CD4-positive, alpha-beta T cell (primary cell): ENCODE measurements at regions of chr16 and their contacts with region 1.

Region 1: DNA sequence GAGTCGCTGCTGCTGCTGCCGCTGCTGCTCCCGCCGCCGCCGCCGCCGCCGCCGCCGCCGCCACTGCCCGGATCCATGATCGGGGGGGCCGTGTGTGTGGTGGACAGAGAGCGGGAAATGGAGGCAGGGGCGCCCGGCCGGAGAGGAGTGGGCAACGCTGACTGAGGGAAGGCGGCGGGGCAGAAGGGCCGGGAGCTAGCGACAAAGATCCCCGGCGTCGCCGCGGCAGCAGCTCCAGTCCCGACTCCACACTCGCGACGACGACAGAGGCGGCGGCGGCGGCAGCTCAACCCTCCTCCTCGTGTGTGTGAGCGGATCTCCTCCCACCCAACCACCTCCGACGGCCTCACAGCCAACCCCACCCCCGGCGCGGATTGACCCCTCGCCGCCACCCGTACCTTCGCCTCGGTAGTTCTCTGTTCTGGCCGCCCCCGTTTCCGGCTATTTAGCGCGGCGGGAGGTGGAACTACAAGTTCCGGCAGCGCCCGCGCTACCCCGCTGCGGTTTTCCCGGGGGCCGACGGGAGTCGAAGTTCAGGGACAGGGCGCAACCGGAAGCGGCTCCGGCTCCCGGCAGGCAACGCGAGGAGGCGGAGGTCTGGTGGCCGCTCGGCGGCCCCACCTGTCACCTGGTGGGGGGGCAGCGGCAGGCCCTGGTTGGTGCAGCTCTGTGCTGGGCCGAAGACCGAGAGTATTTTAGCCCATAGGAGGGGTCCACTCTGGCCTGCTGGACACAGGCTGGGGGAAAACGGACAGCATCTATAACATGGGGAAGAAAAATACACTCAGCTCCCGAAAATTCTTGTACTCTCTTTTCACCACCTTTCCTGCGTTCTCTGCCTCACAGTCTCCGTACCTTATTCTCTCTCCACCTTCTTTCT is at the start of gene GSPT1:
- DNase-seq: peak; percentile 98 to 99 (median 99)
- ATAC-seq: peak; percentile 84
- H3K4me3 ChIP-seq: peak within 1 kb of the TSS; percentile 82
- H3K4me3 Mint-ChIP-seq: peak within 1 kb of the TSS; percentile 98
- H3K27ac ChIP-seq: peak within 1 kb of the TSS; percentile 84 to 86
- H3K27ac Mint-ChIP-seq: peak within 1 kb of the TSS; percentile 98
- H3K4me1 ChIP-seq: peaks cover 32% of the 10 kb centered on the region
- H3K4me1 Mint-ChIP-seq: peaks cover 33% of the 10 kb centered on the region
- H3K27me3 ChIP-seq: peaks cover 0 to 2% of the 10 kb centered on the region in 2 experiments
- H3K27me3 Mint-ChIP-seq: no peaks in the 10 kb centered on the region
- CTCF ChIP-seq: no peak
- total RNA-seq, gene GSPT1: 257 to 269 TPM

Region 2: DNA sequence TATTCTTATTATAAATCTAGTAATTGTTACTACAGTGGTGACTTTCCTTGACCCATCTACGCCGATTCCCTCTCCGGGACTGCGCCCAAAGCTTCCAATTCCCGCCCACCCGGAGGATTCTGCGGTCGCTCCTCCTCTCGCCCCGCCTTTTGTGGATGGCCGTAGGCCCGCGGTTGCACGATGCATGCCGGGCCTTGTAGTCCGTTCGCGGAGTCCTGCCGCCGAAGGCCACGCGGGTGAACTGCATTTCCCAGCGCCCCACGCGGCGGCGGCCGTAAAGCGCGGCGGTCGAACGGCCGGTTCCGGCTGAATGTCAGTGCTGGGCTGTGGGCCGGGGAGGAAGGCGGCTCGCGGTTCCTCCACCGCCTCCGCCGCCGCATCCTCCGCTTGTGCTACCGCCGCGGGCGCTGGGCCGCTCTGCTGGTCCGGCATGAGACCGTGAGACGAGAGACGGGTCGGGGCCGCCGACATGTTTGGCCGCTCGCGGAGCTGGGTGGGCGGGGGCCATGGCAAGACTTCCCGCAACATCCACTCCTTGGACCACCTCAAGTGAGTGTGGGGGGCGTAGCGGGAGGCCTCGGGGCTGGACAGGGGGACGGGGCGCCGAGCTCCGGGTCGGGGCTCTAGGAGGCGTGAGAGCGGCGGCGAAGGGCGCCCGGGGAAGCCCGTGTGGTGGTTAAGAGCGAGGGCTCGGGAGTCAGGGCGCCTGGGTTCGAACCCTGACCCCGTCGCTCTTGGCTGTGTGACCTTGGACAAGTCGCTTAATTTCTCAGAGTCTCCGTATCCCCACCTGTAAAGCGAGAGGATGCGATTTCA is 971.4 kb before region 1 on chr16 and contains the start of gene CLEC16A:
- CTCF ChIA-PET with region 1: no interaction called
- POLR2A ChIA-PET with region 1: interaction called, 5 read pairs
- intact Hi-C with region 1: loop called in 1 of 2 experiments (anchors 5 kb)
- DNase-seq: peak; percentile 89 to 98 (median 95)
- ATAC-seq: peak; percentile 76
- H3K4me3 ChIP-seq: peak within 1 kb of the TSS; percentile 85
- H3K4me3 Mint-ChIP-seq: peak within 1 kb of the TSS; percentile 96
- H3K27ac ChIP-seq: peak within 1 kb of the TSS in 1 of 2 donors; percentile 55
- H3K27ac Mint-ChIP-seq: peak within 1 kb of the TSS; percentile 76
- H3K4me1 ChIP-seq: peaks cover 73% of the 10 kb centered on the region
- H3K4me1 Mint-ChIP-seq: peaks cover 73% of the 10 kb centered on the region
- H3K27me3 ChIP-seq: no peaks in the 10 kb centered on the region
- H3K27me3 Mint-ChIP-seq: no peaks in the 10 kb centered on the region
- CTCF ChIP-seq: no peak
- total RNA-seq, gene CLEC16A: 21.7 to 22.7 TPM

Region 3: GRCh38 chr16:11742539-11743307 is 173.2 kb before region 1 on chr16 and contains the start of gene TXNDC11:
- CTCF ChIA-PET with region 1: no interaction called
- POLR2A ChIA-PET with region 1: interaction called, 10 read pairs
- intact Hi-C with region 1: loop called in 1 of 2 experiments (anchors 2 kb)
- DNase-seq: peak; percentile 98 to 100 (median 99)
- ATAC-seq: peak; percentile 92
- H3K4me3 ChIP-seq: peak within 1 kb of the TSS; percentile 95
- H3K4me3 Mint-ChIP-seq: peak within 1 kb of the TSS; percentile 96
- H3K27ac ChIP-seq: peak within 1 kb of the TSS; percentile 86 to 92
- H3K27ac Mint-ChIP-seq: peak within 1 kb of the TSS; percentile 99
- H3K4me1 ChIP-seq: peaks cover 52% of the 10 kb centered on the region
- H3K4me1 Mint-ChIP-seq: peaks cover 60% of the 10 kb centered on the region
- H3K27me3 ChIP-seq: no peaks in the 10 kb centered on the region
- H3K27me3 Mint-ChIP-seq: no peaks in the 10 kb centered on the region
- CTCF ChIP-seq: no peak
- total RNA-seq, gene TXNDC11: 111 to 112 TPM

Region 4: DNA sequence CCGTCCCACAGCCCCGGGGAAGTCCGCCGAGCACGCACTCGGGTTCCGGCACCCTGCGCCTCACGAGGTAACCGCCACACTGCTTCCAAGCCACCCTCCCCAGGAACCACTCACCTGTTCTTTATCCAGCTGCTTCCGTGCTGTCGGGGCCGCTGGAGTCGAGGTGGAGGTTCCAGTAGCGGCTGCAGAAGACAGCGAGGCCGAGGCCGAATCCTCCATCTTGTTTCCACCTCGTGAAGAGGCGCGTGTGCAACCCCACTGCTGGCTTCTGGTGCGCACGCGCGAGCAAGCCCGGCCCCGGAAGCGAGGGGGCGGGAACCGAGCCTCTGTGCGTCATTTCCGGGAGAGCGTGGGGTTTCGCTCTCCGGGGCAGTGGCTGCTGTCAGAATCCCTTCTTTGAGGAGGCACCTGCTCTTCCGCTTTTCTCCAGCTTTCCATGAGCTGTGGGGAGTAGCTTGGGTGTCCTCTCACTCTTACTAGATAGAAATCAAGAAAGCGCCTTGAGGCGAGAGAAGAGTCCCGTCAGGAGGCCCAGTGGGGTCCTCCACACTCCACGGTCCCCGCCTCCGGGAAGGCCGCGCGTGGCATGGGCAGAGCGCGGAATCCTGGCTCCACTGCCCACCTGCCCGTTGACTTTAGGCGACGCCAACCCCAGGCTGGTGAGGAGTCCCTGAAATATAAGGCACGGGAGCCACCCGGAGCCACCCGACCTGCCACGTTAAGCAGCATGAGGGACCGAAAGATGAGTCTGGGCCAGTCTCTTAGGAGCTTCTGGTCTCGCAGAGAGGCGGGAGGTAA is 64.4 kb before region 1 on chr16 and contains the start of gene RSL1D1:
- CTCF ChIA-PET with region 1: no interaction called
- POLR2A ChIA-PET with region 1: interaction called, 7 read pairs
- intact Hi-C with region 1: loop called (anchors 1 kb)
- DNase-seq: peak; percentile 87 to 98 (median 92)
- ATAC-seq: peak; percentile 85
- H3K4me3 ChIP-seq: peak within 1 kb of the TSS; percentile 75
- H3K4me3 Mint-ChIP-seq: peak within 1 kb of the TSS; percentile 97
- H3K27ac ChIP-seq: peak within 1 kb of the TSS; percentile 78 to 86
- H3K27ac Mint-ChIP-seq: peak within 1 kb of the TSS; percentile 96
- H3K4me1 ChIP-seq: peaks cover 42% of the 10 kb centered on the region
- H3K4me1 Mint-ChIP-seq: peaks cover 68% of the 10 kb centered on the region
- H3K27me3 ChIP-seq: no peaks in the 10 kb centered on the region
- H3K27me3 Mint-ChIP-seq: no peaks in the 10 kb centered on the region
- CTCF ChIP-seq: no peak
- total RNA-seq, gene RSL1D1: 224 to 237 TPM

Region 5: GRCh38 chr16:11871193-11871592 is 44.7 kb before region 1 on chr16:
- CTCF ChIA-PET with region 1: no interaction called
- POLR2A ChIA-PET with region 1: no interaction called
- intact Hi-C with region 1: loop called in 1 of 2 experiments (anchors 5 kb)
- DNase-seq: peak in 1 of 14 experiments; percentile 15
- ATAC-seq: no peak
- H3K4me3 ChIP-seq: no peak overlapping the region
- H3K4me3 Mint-ChIP-seq: no peak overlapping the region
- H3K27ac ChIP-seq: no peak overlapping the region
- H3K27ac Mint-ChIP-seq: peak overlapping the region; percentile 62
- H3K4me1 ChIP-seq: no peaks in the 10 kb centered on the region
- H3K4me1 Mint-ChIP-seq: peaks cover 6% of the 10 kb centered on the region
- H3K27me3 ChIP-seq: no peaks in the 10 kb centered on the region
- H3K27me3 Mint-ChIP-seq: no peaks in the 10 kb centered on the region
- CTCF ChIP-seq: no peak

Region 6: DNA sequence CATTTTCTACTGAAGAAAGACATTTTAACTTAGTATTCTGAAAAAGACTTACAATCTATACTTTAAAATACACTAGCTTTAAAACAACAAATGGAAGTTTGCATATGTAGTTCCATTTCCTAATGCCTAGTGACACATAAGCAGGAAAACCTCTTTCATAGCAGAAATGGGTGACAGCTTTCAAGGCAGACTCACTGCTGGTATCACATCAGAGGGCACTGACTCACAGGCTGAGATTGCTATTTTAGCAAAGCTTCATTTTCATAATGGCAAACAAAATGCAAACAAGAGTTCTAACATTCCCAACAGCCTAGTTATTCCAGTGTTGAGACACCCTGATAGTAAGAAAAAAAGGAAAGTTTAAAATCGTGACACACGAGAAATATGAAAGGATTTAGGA is 19.1 kb before region 1 on chr16:
- CTCF ChIA-PET with region 1: interaction called, 3 read pairs
- POLR2A ChIA-PET with region 1: interaction called, 4 read pairs
- intact Hi-C with region 1: loop called (anchors 2 kb)
- DNase-seq: no peak
- ATAC-seq: no peak
- H3K4me3 ChIP-seq: no peak overlapping the region
- H3K4me3 Mint-ChIP-seq: no peak overlapping the region
- H3K27ac ChIP-seq: no peak overlapping the region
- H3K27ac Mint-ChIP-seq: no peak overlapping the region
- H3K4me1 ChIP-seq: peaks cover 22% of the 10 kb centered on the region
- H3K4me1 Mint-ChIP-seq: peaks cover 52% of the 10 kb centered on the region
- H3K27me3 ChIP-seq: no peaks in the 10 kb centered on the region
- H3K27me3 Mint-ChIP-seq: no peaks in the 10 kb centered on the region
- CTCF ChIP-seq: no peak